ENCODE measurements at regions of chr2 and their contacts with region 1.

Region 1: GRCh38 chr2:43484323-43484930 is 111.4 kb downstream of the THADA start:
- DNase-seq: peak; percentile 45
- H3K4me3 ChIP-seq: no peak overlapping the region
- H3K27me3 ChIP-seq: no peaks in the 10 kb centered on the region
- CTCF ChIP-seq: peak; percentile 46

Region 2: DNA sequence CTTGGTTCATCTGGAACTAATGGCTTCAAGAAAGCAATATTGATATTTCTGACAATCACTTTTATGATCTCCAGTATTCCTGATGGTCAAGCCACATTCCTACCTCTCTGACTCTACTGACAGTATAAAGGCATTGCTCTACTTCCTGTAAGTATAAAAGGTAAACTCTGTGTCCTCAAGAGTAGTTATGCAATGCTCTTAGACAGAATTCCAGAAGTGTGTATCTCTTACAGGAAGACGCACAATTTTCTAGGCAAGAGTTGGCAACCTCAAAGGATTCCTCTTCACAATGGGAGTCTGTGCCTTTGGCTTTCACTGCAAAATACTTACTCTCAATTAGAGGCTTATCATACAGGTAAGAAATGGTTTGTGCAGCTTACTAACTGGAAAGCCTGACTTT is 11.3 kb after region 1 on chr2:
- CTCF ChIA-PET with region 1: interaction called, 12 read pairs
- POLR2A ChIA-PET with region 1: no interaction called
- DNase-seq: no peak
- H3K4me3 ChIP-seq: no peak overlapping the region
- H3K27me3 ChIP-seq: no peaks in the 10 kb centered on the region
- CTCF ChIP-seq: no peak

Region 3: DNA sequence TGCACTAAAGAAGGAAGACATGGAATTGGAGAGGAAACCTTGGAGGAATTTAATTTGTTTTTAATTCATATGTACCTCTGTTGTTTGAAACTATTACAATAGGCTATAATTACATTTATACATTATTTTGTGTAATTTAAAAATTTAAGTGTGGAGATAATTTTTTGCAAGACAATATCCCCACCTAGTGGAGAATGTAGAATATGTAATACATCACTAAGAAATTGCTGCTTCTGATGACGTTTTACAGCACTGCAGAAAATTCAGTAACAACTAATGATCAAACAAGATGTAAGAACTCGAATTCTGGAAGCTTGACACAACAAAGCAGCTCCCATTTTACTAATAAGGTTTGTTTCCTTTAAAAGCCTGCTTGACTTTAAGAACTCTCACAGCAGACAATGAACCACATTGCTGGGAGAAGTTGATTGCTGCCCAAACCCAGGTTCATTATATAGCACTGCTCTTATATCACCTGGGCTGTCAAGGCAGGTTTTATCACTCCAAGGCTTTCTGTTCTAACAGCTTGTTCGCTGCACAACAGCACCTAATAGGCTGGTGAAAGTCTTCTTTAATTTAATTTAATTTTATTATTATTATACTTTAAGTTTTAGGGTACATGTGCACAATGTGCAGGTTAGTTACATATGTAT is 58.0 kb after region 1 on chr2:
- CTCF ChIA-PET with region 1: interaction called, 16 read pairs
- POLR2A ChIA-PET with region 1: interaction called, 4 read pairs
- DNase-seq: no peak
- H3K4me3 ChIP-seq: no peak overlapping the region
- H3K27me3 ChIP-seq: no peaks in the 10 kb centered on the region
- CTCF ChIP-seq: peak; percentile 34

Region 4: DNA sequence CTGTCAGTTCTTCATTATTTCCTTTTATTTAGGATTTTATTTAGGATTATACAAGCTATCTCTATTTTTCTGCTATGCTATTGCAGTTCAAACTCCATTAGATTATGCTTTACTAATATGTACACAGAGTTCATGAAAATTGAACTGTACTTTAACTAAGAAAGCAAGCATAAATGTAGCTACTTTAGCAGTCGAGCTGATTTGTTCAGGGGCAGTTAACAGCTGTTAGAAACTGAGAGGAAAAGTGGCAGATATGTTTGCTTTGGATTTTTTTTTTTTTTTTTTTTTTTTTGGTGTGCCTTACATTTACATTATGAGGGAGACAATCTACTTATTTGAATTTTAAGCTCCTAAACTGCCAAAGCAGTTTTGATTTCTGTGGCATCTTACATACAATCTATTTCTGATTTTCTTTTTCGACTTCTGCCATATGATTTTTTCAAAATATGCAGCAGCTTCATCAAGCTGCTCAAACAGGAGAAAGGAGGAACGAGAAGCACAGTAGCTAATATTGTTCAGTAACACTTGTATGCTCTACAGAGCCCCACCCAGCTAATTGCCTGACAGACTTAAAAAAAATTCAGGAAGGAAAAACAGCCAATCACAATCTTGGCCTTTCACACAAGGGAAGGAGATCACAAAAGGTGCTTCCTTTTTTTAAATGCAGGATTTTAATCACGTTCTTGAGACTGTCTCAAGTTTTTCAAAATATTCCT is 1223.7 kb after region 1 on chr2:
- CTCF ChIA-PET with region 1: no interaction called
- POLR2A ChIA-PET with region 1: no interaction called
- DNase-seq: no peak
- H3K4me3 ChIP-seq: no peak overlapping the region
- H3K27me3 ChIP-seq: no peaks in the 10 kb centered on the region
- CTCF ChIP-seq: no peak